ENCODE measurements at regions of chr16 and their contacts with region 1.

Region 1: GRCh38 chr16:85428168-85428898 is 184.8 kb upstream of the GSE1 start:
- DNase-seq: peak; percentile 67
- ATAC-seq: peak; percentile 64

Region 2: GRCh38 chr16:85305996-85306792 is 122.1 kb before region 1 on chr16:
- intact Hi-C with region 1: loop called (anchors 5 kb)
- DNase-seq: peak; percentile 94
- ATAC-seq: peak; percentile 79

Measured in sciatic nerve (tissue), 2 donors.